Activated CD4-positive, alpha-beta T cell treated with anti-CD3 and anti-CD28 coated beads, Interleukin-2, amount 10 ng/mL, durations not matched to agents 24 days and 14 days (primary cell): ENCODE measurements at regions of chr6 and their contacts with region 1.

Region 1: GRCh38 chr6:75493400-75494064 is at the start of gene FILIP1:
- DNase-seq: no peak
- H3K4me3 Mint-ChIP-seq: no peak within 1 kb of the TSS
- H3K27ac Mint-ChIP-seq: no peak within 1 kb of the TSS
- H3K4me1 Mint-ChIP-seq: peaks cover 13% of the 10 kb centered on the region
- H3K27me3 Mint-ChIP-seq: peaks cover 56% of the 10 kb centered on the region
- total RNA-seq, gene FILIP1: not detected in 2 replicates

Region 2: DNA sequence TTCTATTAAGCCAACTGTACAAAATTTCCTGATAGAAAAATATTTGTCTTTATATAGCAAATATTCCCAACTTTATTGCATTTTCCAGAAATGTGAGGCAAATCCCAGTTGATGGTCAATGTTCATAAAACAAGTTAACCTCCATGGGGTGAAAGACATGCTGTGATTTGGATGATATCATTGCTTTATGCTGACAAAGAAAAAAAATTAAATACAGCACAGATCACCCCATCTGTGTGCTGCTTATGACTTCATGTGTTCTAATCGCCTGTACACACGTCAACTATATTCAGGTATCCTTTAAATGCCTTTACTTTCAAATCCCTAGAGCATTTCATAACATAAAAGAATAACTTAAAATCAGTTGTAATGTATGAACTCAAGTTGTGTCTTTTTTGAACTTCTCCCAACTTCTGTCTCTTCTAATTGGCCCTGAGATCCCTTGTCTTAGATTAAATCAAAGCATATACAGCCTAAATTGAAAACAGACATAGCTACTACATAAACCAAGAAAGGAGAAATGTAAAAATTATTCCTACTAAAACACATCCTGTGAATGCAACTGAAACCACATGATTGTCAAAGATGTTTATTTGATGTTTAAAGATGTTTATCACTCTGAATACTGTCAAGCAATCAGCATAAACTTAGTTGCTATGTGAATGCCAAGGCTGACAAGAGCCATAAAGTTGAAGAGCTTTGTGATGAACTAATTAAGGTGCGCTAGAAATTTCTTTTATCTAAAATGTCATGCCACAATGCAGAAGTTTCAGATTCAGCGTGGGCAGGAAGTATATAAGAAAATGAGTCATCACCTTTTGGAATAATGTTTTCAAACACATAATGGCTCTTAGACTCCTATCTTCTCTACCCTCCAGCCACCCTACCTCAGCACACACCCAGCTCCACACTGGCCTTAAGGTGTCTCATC is 68.6 kb before region 1 on chr6:
- intact Hi-C with region 1: loop called (anchors 2 kb)
- DNase-seq: no peak
- H3K4me3 Mint-ChIP-seq: no peak overlapping the region
- H3K27ac Mint-ChIP-seq: no peak overlapping the region
- H3K4me1 Mint-ChIP-seq: peaks cover 9% of the 10 kb centered on the region
- H3K27me3 Mint-ChIP-seq: peaks cover 3% of the 10 kb centered on the region